Pancreas (tissue), 10 donors: ENCODE measurements at regions of chr16 and their contacts with region 1.

Region 1: DNA sequence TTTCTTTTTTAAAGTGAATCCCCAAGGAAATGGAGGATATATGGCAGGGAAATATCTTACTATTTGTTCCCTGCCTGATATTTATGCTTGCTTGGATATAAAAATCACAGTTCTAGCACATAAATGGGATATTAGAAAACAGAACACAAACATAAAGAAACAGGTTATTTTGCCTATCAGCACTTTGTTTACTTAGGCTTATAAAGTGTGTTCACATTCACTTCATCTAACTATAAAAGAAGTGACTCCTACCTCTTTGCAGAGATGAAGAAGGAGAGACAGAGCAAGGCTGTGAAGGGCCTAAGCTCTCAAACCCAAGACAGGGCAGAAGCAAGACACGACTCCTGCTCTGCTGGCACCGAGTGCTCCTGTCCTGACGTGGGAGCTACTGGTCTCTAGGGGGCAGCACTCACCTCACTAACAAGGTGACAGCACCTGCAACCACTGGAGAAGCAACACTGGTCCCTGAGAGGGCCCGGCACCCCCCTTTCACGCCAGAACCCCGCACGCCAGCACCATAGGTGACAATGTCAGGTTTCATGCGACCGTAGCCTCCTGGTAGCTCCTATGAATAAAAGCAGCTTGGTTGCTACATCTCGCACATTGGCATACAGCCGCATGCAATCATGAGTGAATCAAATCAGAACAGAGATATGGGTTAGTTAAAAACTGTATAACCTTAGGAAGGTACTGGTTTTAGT is 32.0 kb downstream of the MBTPS1 start:
- DNase-seq: peak in 5 of 6 donors; percentile 52 to 72 (median 68)
- ATAC-seq: peak; percentile 74 to 95 (median 88)
- H3K4me3 ChIP-seq: no peak overlapping the region
- H3K27ac ChIP-seq: no peak overlapping the region
- H3K4me1 ChIP-seq: no peaks in the 10 kb centered on the region
- H3K27me3 ChIP-seq: no peaks in the 10 kb centered on the region
- CTCF ChIP-seq: peak in 3 of 4 donors; percentile 52 to 71 (median 63)

Region 2: DNA sequence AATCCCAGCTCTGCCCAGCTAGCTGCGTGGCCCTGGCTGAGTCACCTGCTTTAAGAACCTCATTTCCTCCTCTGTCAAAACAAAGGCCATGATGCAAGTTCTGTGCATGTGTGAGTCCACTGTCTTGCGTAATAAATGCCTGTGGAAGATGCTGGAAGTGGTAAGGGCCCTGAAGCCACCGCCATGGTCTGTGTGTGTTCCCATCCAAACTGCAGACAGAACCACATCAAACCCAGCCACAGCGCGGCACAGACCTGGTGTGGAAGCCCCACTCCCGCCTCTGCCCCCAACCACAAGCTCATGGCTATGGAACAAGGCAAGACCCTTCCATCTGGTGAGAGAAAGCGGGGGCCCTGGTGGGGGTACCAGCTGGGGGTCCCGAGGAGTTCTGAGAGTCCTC is 90.6 kb before region 1 on chr16:
- intact Hi-C with region 1: no loop called
- DNase-seq: peak in 1 of 6 donors; percentile 48
- ATAC-seq: peak in 1 of 4 donors; percentile 15
- H3K4me3 ChIP-seq: no peak overlapping the region
- H3K27ac ChIP-seq: no peak overlapping the region
- H3K4me1 ChIP-seq: peaks cover 0 to 4% (median 0%) of the 10 kb centered on the region in 3 donors
- H3K27me3 ChIP-seq: no peaks in the 10 kb centered on the region
- CTCF ChIP-seq: no peak

Region 3: GRCh38 chr16:84186685-84187437 is 102.1 kb after region 1 on chr16 and contains the start of gene TAF1C:
- intact Hi-C with region 1: loop called in 1 of 3 experiments (anchors 10 kb)
- DNase-seq: peak; percentile 85 to 96 (median 92)
- ATAC-seq: peak; percentile 98 to 99 (median 99)
- H3K4me3 ChIP-seq: peak within 1 kb of the TSS; percentile 57 to 99 (median 92)
- H3K27ac ChIP-seq: peak within 1 kb of the TSS in 2 of 4 donors; percentile 22 to 41
- H3K4me1 ChIP-seq: peaks cover 4 to 16% (median 12%) of the 10 kb centered on the region in 3 donors
- H3K27me3 ChIP-seq: no peaks in the 10 kb centered on the region
- CTCF ChIP-seq: peak; percentile 84 to 97 (median 90)
- total RNA-seq, gene TAF1C: 14.9 to 38.1 (median 20.1) TPM

Region 4: DNA sequence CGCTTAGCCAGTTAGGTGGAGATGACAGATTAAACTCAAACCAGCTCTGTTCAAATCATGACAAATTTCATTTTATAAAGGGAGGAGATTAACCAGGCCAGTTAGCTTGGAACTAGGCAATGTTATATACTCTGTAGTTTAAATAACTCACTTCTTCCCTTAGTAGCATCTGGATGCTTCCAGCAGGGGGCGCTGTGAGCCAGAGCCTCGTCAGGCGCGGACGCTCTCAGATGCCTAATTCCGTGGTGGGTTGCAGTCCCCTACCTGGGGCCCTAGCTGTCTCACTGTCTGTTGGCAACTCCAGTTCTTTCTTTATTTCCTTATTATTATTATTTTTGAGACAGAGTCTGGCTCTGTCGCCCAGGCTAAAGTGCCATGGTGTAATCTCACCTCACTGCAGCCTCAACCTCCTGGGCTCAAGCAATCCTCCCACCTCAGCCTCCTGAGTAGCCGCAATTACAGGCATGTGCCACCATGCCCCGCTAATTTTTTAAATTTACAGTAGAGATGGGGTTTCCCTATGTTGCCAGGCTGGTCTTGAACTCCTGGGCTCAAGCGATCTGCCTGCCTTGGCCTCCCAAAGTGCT is 192.6 kb after region 1 on chr16:
- intact Hi-C with region 1: no loop called
- DNase-seq: peak in 5 of 6 donors; percentile 11 to 81 (median 40)
- ATAC-seq: peak in 3 of 4 donors; percentile 60 to 76 (median 66)
- H3K4me3 ChIP-seq: no peak overlapping the region
- H3K27ac ChIP-seq: no peak overlapping the region
- H3K4me1 ChIP-seq: no peaks in the 10 kb centered on the region
- H3K27me3 ChIP-seq: peaks cover 0 to 6% (median 0%) of the 10 kb centered on the region in 4 donors
- CTCF ChIP-seq: peak; percentile 53 to 69 (median 62)

Region 5: GRCh38 chr16:84643180-84643583 is 558.5 kb after region 1 on chr16:
- intact Hi-C with region 1: no loop called
- DNase-seq: peak in 3 of 6 donors; percentile 47 to 59 (median 50)
- ATAC-seq: peak; percentile 41 to 75 (median 70)
- H3K4me3 ChIP-seq: no peak overlapping the region
- H3K27ac ChIP-seq: peak overlapping the region in 2 of 4 donors; percentile 36 to 60
- H3K4me1 ChIP-seq: peaks cover 0 to 12% (median 0%) of the 10 kb centered on the region in 3 donors
- H3K27me3 ChIP-seq: no peaks in the 10 kb centered on the region
- CTCF ChIP-seq: no peak

Region 6: GRCh38 chr16:84785843-84786581 is 701.3 kb after region 1 on chr16:
- intact Hi-C with region 1: no loop called
- DNase-seq: peak; percentile 55 to 89 (median 72)
- ATAC-seq: peak; percentile 68 to 82 (median 74)
- H3K4me3 ChIP-seq: no peak overlapping the region
- H3K27ac ChIP-seq: peak overlapping the region; percentile 22 to 66 (median 62)
- H3K4me1 ChIP-seq: peaks cover 8 to 10% (median 8%) of the 10 kb centered on the region in 3 donors
- H3K27me3 ChIP-seq: no peaks in the 10 kb centered on the region
- CTCF ChIP-seq: no peak